ENCODE measurements at regions of chr18 and their contacts with region 1.

Region 1: DNA sequence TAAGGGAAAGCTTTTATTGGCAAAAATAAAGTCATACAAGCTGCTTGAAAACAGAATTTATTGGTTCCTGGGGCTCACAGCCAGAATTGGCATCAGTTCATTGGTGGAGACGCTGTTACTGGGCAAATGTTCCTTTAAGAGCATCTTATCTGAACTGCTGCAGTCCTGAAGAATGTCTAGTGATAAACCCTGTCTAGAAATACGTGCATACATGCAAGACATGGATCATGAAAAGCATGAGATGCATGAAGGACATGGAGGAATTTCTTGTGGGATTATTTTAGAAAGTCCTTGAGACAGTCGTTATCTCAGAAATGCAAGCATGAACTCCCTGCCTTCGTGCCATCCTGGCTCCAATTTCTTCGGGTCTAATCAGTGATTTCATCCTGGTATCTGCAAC is 32.5 kb upstream of the FHOD3 start:
- DNase-seq: peak in 4 of 7 donors; percentile 21 to 49 (median 32)
- H3K4me3 ChIP-seq: no peak overlapping the region
- H3K27ac ChIP-seq: no peak overlapping the region
- H3K4me1 ChIP-seq: peaks cover 0 to 8% of the 10 kb centered on the region in 2 donors
- H3K27me3 ChIP-seq: no peaks in the 10 kb centered on the region
- CTCF ChIP-seq: no peak
- POLR2A ChIP-seq: no peak

Region 2: DNA sequence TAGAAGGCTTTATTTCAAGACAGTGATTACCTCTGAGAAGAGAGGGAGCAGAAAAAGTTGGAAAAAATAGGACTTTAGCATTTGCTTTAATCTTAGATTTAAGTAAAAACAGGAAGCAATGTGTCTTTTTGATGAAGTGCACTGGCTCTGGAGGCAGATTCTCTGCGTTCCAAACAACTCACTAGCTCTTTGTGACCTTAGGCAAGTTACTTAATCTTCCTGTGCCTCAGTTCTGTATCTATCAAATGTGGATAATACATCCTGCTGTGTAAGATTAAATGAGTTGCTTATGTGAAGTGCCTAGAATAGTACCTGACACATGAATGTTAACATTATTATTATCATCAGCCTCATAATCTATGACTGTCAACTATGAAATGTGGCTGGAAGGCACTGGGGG is 240.0 kb before region 1 on chr18:
- intact Hi-C with region 1: no loop called
- DNase-seq: peak in 3 of 7 donors; percentile 34 to 47 (median 42)
- H3K4me3 ChIP-seq: no peak overlapping the region
- H3K27ac ChIP-seq: peak overlapping the region in 2 of 5 donors; percentile 0 to 48
- H3K4me1 ChIP-seq: peaks cover 0 to 35% of the 10 kb centered on the region in 2 donors
- H3K27me3 ChIP-seq: no peaks in the 10 kb centered on the region
- CTCF ChIP-seq: no peak
- POLR2A ChIP-seq: no peak

Region 3: DNA sequence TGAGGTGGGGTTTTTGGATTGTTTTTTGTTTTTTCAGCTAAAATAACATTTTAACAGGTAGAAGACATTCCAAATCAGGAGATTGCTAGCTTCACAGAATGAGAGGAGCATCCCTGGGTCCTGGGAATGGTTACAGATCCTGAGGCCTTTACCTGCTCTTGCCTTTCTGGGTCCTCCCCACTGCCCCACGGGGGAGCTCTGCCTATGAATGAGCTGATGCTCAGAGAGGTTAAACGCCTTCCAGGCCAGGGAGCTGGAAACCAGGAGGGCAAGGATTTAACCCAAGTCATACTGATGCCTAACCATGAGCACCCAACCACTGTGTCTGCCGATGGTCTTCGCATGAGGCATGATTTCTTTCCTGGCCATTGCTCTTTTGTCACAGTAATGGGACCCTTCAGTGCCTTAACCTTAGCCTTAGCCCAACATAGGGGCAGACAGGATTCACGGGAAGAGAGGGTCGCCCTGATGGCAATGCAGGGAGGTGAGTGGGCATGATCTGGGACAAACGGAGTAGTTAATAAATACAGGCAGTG is 61.6 kb before region 1 on chr18:
- intact Hi-C with region 1: loop called in 1 of 2 experiments (anchors 10 kb)
- DNase-seq: peak in 1 of 7 donors; percentile 29
- H3K4me3 ChIP-seq: no peak overlapping the region
- H3K27ac ChIP-seq: no peak overlapping the region
- H3K4me1 ChIP-seq: no peaks in the 10 kb centered on the region
- H3K27me3 ChIP-seq: no peaks in the 10 kb centered on the region
- CTCF ChIP-seq: no peak
- POLR2A ChIP-seq: no peak